Activated CD4-positive, alpha-beta memory T cell treated with anti-CD3 and anti-CD28 coated beads for 36 hours (primary cell): ENCODE measurements at regions of chr7 and their contacts with region 1.

Region 1: GRCh38 chr7:110733221-110733620 is 357.7 kb upstream of the LRRN3 start:
- DNase-seq: no peak
- H3K4me3 Mint-ChIP-seq: no peak overlapping the region
- H3K27ac Mint-ChIP-seq: no peak overlapping the region
- H3K4me1 Mint-ChIP-seq: no peaks in the 10 kb centered on the region
- H3K27me3 Mint-ChIP-seq: no peaks in the 10 kb centered on the region

Region 2: DNA sequence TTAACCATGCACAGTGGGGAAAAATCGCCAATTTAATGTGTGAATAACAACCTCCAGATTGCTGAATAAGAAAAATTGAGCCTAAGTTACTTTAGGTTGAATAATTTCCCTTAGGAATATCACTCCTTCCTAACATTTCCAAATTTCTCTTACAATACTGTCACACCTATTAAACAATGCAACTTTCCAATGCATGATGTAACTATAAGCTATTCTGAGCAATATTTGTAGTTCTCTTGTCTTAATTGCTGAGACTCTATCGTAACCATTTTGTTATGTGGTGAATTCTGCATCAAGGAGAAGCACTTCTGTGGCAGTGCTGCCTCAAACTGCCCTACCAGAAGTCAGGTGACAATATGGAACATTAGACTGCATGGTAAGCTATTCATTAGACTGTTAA is 29.0 kb before region 1 on chr7:
- CTCF ChIA-PET with region 1: no interaction called
- POLR2A ChIA-PET with region 1: no interaction called
- intact Hi-C with region 1: loop called (anchors 5 kb)
- DNase-seq: no peak
- H3K4me3 Mint-ChIP-seq: no peak overlapping the region
- H3K27ac Mint-ChIP-seq: no peak overlapping the region
- H3K4me1 Mint-ChIP-seq: no peaks in the 10 kb centered on the region
- H3K27me3 Mint-ChIP-seq: no peaks in the 10 kb centered on the region